Left cardiac atrium (tissue), 4 donors: ENCODE measurements at regions of chr1 and their contacts with region 1.

Region 1: GRCh38 chr1:26102526-26102925 is 9.1 kb upstream of the PDIK1L start:
- DNase-seq: no peak
- ATAC-seq: no peak

Region 2: GRCh38 chr1:26035959-26036755 is 66.4 kb before region 1 on chr1:
- intact Hi-C with region 1: loop called in 1 of 2 experiments (anchors 5 kb)
- DNase-seq: peak; percentile 87
- ATAC-seq: peak; percentile 91 to 92

Region 3: DNA sequence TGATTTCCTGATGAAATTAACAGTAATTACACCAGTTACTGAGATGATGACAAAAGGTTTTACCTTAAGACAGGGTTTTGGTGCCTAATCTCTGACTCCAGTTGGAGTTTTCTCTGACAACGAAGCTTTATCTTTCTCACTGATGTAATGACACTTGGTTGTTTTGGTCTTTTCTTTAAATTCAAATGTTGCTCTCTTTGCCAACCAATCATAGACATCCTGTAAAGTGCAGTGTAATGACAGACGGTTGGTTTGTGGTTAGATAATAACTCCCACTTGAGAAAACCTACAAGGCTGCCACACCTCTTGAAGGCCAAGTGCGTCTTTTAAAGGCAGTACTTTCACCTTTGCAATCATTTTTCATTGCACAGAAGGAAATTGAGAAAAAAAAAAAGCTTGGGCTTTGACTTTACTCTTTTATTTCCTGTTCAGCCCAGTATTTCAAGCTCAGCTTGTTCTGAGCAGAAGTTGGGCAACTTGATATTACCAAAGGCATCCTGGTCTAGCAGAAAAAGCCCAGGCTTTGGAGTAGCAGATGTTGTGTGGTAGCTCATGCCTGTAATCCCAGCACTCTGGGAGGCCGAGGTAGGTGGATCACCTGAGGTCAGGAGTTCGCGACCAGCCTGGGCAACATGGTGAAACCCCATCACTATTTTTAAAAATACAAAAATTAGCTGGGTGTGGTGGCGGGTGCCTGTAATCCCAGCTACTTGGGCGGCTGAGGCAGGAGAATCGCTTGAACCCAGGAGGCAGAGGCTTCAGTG is 24.0 kb after region 1 on chr1:
- intact Hi-C with region 1: no loop called
- DNase-seq: no peak
- ATAC-seq: peak; percentile 72 to 75

Region 4: DNA sequence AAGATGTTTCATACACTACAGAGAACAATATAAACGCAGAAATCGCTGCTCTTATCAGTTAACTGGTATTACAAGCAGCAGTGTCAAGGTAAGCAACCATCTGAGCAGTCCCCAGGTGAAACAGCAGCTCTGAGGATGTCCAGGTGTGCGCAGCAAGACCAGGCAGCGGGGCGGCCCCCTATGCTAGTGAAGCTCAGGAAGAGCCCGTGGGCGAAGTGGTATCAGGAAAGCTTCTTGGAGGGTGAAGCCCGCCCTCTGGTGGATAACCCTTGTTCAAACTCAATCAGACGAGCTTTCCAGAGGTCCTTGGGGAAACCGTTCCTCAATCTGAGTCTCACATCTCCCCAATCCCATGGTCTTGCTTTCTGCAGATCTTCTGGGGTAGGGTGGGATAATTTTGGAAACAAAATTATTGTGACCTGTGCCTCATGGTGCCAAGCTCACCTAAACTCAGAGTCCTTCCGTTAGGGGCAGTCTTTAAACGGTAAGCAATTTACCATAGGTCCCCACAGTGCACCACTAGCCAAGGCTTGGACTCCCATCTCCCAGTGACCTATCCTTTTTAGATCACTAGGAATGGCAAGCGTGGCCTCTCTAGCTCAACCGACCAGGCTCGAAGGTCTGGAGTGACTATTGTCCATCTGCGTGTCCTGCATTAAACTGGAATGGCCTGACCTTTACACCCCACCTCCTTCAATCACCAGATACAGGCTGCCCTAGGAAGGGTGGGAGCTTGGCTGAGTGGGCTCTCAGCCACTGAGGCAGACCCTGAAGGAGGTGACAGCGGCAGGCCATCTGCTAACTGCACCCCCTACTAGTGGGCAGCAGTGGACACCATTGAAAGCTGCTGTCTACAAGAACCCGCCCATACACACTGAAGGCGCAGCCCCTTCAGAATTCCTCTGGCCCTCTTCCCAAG is 42.8 kb after region 1 on chr1:
- intact Hi-C with region 1: loop called (anchors 2 to 5 kb)
- DNase-seq: peak; percentile 81
- ATAC-seq: peak; percentile 91 to 95

Region 5: GRCh38 chr1:26161415-26162219 is 59.1 kb after region 1 on chr1:
- intact Hi-C with region 1: loop called in 1 of 2 experiments (anchors 1 kb)
- DNase-seq: peak; percentile 80
- ATAC-seq: peak; percentile 65 to 66

Region 6: GRCh38 chr1:26225033-26225831 is 122.7 kb after region 1 on chr1:
- intact Hi-C with region 1: no loop called
- DNase-seq: peak; percentile 73
- ATAC-seq: peak; percentile 83 to 95

Region 7: GRCh38 chr1:26287033-26287711 is 184.6 kb after region 1 on chr1:
- intact Hi-C with region 1: no loop called
- DNase-seq: peak; percentile 61
- ATAC-seq: peak; percentile 18 to 25

Region 8: GRCh38 chr1:26321315-26322041 is 219.0 kb after region 1 on chr1:
- intact Hi-C with region 1: loop called in 1 of 2 experiments (anchors 2 kb)
- DNase-seq: peak; percentile 93
- ATAC-seq: peak; percentile 91 to 92